ENCODE measurements at regions of chr5 and their contacts with region 1.

Region 1: GRCh38 chr5:97162045-97162444 is 19.6 kb upstream of the LIX1 start:
- DNase-seq: peak; percentile 44 to 61 (median 59)
- H3K4me3 ChIP-seq: no peak overlapping the region
- H3K4me3 Mint-ChIP-seq: no peak overlapping the region
- H3K27ac ChIP-seq: no peak overlapping the region
- H3K27ac Mint-ChIP-seq: peak overlapping the region in 4 of 7 donors; percentile 18 to 83 (median 45)
- H3K4me1 ChIP-seq: peaks cover 3% of the 10 kb centered on the region
- H3K4me1 Mint-ChIP-seq: peaks cover 3 to 18% (median 6%) of the 10 kb centered on the region in 4 donors
- H3K27me3 ChIP-seq: no peaks in the 10 kb centered on the region
- H3K27me3 Mint-ChIP-seq: no peaks in the 10 kb centered on the region

Region 2: DNA sequence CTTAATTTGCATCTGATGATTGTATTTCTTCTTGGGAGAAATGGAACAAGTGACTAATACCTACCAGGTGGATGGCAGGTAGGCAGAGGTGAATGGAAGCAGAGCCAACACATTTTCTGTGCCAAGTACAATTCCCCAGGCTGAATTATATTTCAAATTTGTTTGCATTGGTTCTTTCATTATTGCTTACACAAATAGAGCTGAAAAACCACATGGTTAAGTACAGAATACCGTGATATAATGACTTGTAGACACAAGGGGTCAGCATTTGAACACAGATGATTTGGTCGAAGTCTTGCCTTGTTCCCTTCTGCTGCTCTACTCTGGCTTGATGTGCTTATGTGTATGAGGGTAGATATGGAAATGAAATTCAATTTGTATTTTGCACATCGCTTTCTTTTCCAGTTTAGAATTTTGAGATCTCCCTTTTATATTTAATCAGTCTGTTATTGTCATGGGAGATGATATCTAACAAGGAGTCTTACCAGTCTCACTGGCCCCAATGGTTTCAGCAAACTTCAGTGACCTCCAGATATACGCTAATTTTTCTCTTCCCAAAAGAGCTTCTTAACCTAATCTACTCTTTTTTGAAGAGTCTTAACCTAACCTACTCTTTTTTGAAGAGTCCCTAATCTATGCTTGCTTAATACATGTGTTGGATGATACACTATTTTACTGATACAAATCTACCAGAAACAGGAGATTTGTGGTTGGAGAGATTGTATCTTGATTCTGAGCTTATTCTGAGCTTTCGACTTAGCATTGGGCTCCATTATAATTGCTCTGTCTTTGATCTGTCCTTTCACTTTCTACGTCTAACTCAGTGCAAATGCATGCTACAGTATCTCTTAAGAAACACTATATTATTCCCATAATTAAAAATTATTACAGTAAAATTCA is 817.1 kb before region 1 on chr5:
- CTCF ChIA-PET with region 1: interaction called, 4 read pairs
- POLR2A ChIA-PET with region 1: no interaction called
- intact Hi-C with region 1: loop called (anchors 5 kb)
- DNase-seq: peak in 4 of 5 donors; percentile 64 to 76 (median 68)
- H3K4me3 ChIP-seq: no peak overlapping the region
- H3K4me3 Mint-ChIP-seq: peak overlapping the region; percentile 10 to 60 (median 43)
- H3K27ac ChIP-seq: no peak overlapping the region
- H3K27ac Mint-ChIP-seq: peak overlapping the region in 6 of 7 donors; percentile 4 to 66 (median 19)
- H3K4me1 ChIP-seq: peaks cover 17% of the 10 kb centered on the region
- H3K4me1 Mint-ChIP-seq: peaks cover 12 to 18% (median 14%) of the 10 kb centered on the region in 4 donors
- H3K27me3 ChIP-seq: peaks cover 7% of the 10 kb centered on the region
- H3K27me3 Mint-ChIP-seq: peaks cover 7 to 9% of the 10 kb centered on the region in 2 donors

Region 3: GRCh38 chr5:96752341-96753016 is 409.6 kb before region 1 on chr5:
- CTCF ChIA-PET with region 1: interaction called, 104 read pairs
- POLR2A ChIA-PET with region 1: interaction called, 5 read pairs
- intact Hi-C with region 1: loop called (anchors 1 kb)
- DNase-seq: peak; percentile 44 to 66 (median 62)
- H3K4me3 ChIP-seq: no peak overlapping the region
- H3K4me3 Mint-ChIP-seq: no peak overlapping the region
- H3K27ac ChIP-seq: no peak overlapping the region
- H3K27ac Mint-ChIP-seq: peak overlapping the region in 3 of 7 donors; percentile 10 to 84 (median 50)
- H3K4me1 ChIP-seq: no peaks in the 10 kb centered on the region
- H3K4me1 Mint-ChIP-seq: peaks cover 0 to 3% (median under 1%) of the 10 kb centered on the region in 4 donors
- H3K27me3 ChIP-seq: no peaks in the 10 kb centered on the region
- H3K27me3 Mint-ChIP-seq: no peaks in the 10 kb centered on the region

Region 4: GRCh38 chr5:96997265-96997859 is 164.7 kb before region 1 on chr5:
- CTCF ChIA-PET with region 1: interaction called, 8 read pairs
- POLR2A ChIA-PET with region 1: no interaction called
- intact Hi-C with region 1: loop called (anchors 5 kb)
- DNase-seq: peak in 4 of 5 donors; percentile 14 to 24 (median 18)
- H3K4me3 ChIP-seq: no peak overlapping the region
- H3K4me3 Mint-ChIP-seq: no peak overlapping the region
- H3K27ac ChIP-seq: no peak overlapping the region
- H3K27ac Mint-ChIP-seq: peak overlapping the region in 2 of 7 donors; percentile 37 to 43
- H3K4me1 ChIP-seq: no peaks in the 10 kb centered on the region
- H3K4me1 Mint-ChIP-seq: peaks cover 8 to 22% (median 14%) of the 10 kb centered on the region in 4 donors
- H3K27me3 ChIP-seq: no peaks in the 10 kb centered on the region
- H3K27me3 Mint-ChIP-seq: no peaks in the 10 kb centered on the region

Region 5: DNA sequence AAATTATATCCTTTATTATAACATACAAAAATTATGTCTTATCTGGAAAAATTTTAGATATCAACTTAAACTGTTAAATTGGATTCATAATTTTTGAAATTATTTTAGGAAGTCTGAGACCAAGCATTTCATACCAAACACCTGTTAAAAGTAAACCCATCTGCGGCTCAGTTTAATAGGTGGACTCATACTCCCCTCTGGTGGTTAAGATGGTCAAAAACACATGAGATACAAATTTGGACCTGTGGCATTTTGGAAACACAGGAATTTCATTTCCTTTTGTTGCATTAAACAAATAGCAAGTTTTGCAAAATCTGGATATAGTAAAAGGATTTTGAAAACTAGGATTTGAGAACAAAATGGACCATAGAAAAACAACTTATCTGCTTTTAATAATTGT is 1665.1 kb after region 1 on chr5:
- CTCF ChIA-PET with region 1: no interaction called
- POLR2A ChIA-PET with region 1: no interaction called
- intact Hi-C with region 1: loop called (anchors 5 kb)
- DNase-seq: peak in 3 of 5 donors; percentile 5 to 16 (median 14)
- H3K4me3 ChIP-seq: no peak overlapping the region
- H3K4me3 Mint-ChIP-seq: no peak overlapping the region
- H3K27ac ChIP-seq: no peak overlapping the region
- H3K27ac Mint-ChIP-seq: no peak overlapping the region
- H3K4me1 ChIP-seq: no peaks in the 10 kb centered on the region
- H3K4me1 Mint-ChIP-seq: no peaks in the 10 kb centered on the region
- H3K27me3 ChIP-seq: no peaks in the 10 kb centered on the region
- H3K27me3 Mint-ChIP-seq: no peaks in the 10 kb centered on the region

Measured in CD4-positive, alpha-beta memory T cell (primary cell).